ENCODE measurements at regions of chr19 and their contacts with region 1.

Region 1: DNA sequence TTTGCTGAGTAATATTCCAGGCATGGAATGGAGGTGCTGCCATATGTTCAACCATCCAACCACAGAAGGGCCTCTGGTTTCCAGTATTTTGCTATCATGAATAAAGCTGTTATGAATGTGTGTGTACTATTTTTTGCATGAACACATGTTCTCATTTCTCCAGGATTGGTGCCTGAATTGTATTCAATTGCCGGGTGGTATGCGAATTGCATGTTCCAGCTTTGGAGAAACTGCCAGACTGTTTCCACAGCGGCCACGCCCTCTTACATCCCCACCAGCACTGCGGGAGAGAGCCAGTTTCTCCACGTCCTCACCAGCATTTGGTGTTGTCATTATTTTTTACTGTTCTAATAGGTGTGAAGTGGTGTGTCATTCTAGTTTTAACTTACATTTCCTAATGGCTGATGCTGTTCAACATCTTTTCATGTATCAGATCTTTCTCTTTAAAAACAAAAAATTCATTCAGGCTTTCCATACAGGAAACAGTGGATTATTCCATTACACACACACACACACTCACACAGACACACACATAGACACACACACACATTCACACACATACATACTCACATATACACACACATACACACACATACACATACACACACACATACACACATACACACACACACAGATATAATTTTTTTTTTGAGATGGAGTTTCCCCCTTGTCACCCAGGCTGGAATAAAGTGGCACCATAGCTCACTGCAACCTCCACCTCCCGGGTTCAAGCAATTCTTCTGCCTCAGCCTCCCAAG is 154.1 kb downstream of the PTPRS start:
- DNase-seq: peak; percentile 32
- H3K4me3 ChIP-seq: no peak overlapping the region
- H3K27ac ChIP-seq: no peak overlapping the region
- H3K4me1 ChIP-seq: peaks cover 4% of the 10 kb centered on the region
- H3K27me3 ChIP-seq: no peaks in the 10 kb centered on the region
- CTCF ChIP-seq: no peak

Region 2: GRCh38 chr19:5524081-5524480 is 337.6 kb after region 1 on chr19:
- CTCF ChIA-PET with region 1: no interaction called
- POLR2A ChIA-PET with region 1: no interaction called
- intact Hi-C with region 1: no loop called
- DNase-seq: no peak
- H3K4me3 ChIP-seq: no peak overlapping the region
- H3K27ac ChIP-seq: no peak overlapping the region
- H3K4me1 ChIP-seq: no peaks in the 10 kb centered on the region
- H3K27me3 ChIP-seq: no peaks in the 10 kb centered on the region
- CTCF ChIP-seq: no peak

Region 3: GRCh38 chr19:5536337-5536894 is 349.9 kb after region 1 on chr19:
- CTCF ChIA-PET with region 1: interaction called, 10 read pairs
- POLR2A ChIA-PET with region 1: no interaction called
- intact Hi-C with region 1: no loop called
- DNase-seq: peak; percentile 62
- H3K4me3 ChIP-seq: peak overlapping the region; percentile 15
- H3K27ac ChIP-seq: no peak overlapping the region
- H3K4me1 ChIP-seq: peaks cover 15% of the 10 kb centered on the region
- H3K27me3 ChIP-seq: no peaks in the 10 kb centered on the region
- CTCF ChIP-seq: no peak

Measured in A673 (cell line).